Caco-2 (cell line): ENCODE measurements at regions of chr12 and their contacts with region 1.

Region 1: DNA sequence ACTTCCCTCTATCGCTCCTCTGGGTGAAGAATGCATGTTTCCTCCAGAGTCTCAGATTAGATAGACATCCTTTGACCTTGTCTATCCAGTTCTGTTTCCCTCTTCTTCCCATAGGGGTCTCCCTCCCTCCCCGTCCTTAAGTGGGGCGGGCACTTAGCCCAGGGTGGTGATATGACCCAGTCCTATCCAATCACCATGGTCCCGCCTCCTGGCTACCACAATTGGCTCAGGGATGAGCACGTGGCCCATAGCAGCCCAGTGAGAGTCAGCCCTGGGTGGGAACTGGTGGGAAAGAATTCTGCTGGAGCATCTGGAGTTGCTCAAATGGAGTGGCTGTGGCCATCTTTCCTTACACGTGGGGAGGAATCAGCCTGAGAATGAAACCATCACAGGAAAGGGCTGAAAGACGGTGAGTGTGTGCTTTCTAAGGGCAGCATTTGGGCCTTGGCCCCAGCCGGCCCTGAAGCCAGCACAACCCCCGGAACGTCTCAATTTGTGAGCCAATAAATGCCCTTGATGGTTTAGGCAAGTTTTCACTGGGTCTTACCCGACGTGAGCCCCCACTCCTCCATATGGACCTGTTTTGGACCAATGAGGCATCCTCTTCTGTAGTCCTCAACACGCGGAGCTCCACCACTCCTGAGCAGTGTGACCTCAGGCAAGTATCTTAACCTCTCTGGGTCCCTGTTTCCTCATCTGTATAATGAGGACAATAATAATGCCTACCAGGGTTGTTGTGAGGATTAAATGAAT is 14.4 kb upstream of the MLXIP start:
- DNase-seq: peak; percentile 97 to 99
- H3K4me3 ChIP-seq: peak overlapping the region; percentile 42
- H3K4me3 Mint-ChIP-seq: peak overlapping the region; percentile 85
- H3K27ac Mint-ChIP-seq: peak overlapping the region; percentile 83
- H3K4me1 ChIP-seq: peaks cover 27% of the 10 kb centered on the region
- H3K4me1 Mint-ChIP-seq: peaks cover 19% of the 10 kb centered on the region
- H3K27me3 ChIP-seq: no peaks in the 10 kb centered on the region
- H3K27me3 Mint-ChIP-seq: no peaks in the 10 kb centered on the region
- CTCF ChIP-seq: peak; percentile 29 to 75

Region 2: DNA sequence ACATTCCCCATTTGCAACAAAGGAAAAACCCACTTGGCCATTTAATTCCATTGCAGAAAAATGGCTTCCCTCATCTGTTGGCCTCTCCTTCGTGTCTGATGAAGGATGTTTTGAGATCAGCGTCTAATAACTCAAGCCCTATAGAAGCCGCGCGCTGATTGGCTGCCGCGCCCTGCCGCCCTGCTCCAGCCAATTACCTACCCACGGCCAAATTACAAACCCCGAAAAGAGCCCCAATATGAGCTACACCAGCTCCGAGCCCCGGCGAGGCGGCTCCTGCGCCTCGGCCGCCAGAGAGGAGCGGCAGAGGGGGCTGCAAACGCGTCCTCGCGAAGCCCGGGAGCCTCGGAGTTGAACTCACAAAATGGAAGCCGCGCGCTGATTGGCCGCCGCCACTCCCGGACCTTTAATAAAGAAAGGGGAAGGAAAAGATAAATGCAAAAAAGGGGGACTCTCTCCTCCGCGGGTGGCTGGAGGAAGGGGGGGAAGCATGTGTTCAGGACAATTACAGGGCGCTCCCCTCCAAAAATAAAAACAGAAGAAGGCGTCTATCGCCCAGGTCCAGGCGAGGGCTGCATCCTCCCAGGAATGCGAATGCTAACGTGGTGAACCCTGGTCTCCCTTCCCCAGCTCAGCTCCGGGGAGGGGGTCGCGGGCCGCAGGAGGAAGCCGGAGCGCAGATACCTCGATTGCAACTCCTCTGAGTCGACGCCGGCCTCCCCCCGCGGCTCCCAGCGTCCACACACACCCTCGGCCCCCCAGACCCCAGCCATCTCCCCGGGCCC is 261.2 kb before region 1 on chr12:
- CTCF ChIA-PET with region 1: no interaction called
- POLR2A ChIA-PET with region 1: no interaction called
- intact Hi-C with region 1: no loop called
- DNase-seq: peak; percentile 92 to 95
- H3K4me3 ChIP-seq: peak overlapping the region; percentile 80
- H3K4me3 Mint-ChIP-seq: peak overlapping the region; percentile 81
- H3K27ac Mint-ChIP-seq: peak overlapping the region; percentile 96
- H3K4me1 ChIP-seq: peaks cover 20% of the 10 kb centered on the region
- H3K4me1 Mint-ChIP-seq: peaks cover 20% of the 10 kb centered on the region
- H3K27me3 ChIP-seq: no peaks in the 10 kb centered on the region
- H3K27me3 Mint-ChIP-seq: no peaks in the 10 kb centered on the region
- CTCF ChIP-seq: no peak

Region 3: GRCh38 chr12:122009741-122010140 is 54.5 kb before region 1 on chr12:
- CTCF ChIA-PET with region 1: no interaction called
- POLR2A ChIA-PET with region 1: no interaction called
- intact Hi-C with region 1: no loop called
- DNase-seq: no peak
- H3K4me3 ChIP-seq: no peak overlapping the region
- H3K4me3 Mint-ChIP-seq: no peak overlapping the region
- H3K27ac Mint-ChIP-seq: no peak overlapping the region
- H3K4me1 ChIP-seq: no peaks in the 10 kb centered on the region
- H3K4me1 Mint-ChIP-seq: no peaks in the 10 kb centered on the region
- H3K27me3 ChIP-seq: no peaks in the 10 kb centered on the region
- H3K27me3 Mint-ChIP-seq: no peaks in the 10 kb centered on the region
- CTCF ChIP-seq: no peak

Region 4: DNA sequence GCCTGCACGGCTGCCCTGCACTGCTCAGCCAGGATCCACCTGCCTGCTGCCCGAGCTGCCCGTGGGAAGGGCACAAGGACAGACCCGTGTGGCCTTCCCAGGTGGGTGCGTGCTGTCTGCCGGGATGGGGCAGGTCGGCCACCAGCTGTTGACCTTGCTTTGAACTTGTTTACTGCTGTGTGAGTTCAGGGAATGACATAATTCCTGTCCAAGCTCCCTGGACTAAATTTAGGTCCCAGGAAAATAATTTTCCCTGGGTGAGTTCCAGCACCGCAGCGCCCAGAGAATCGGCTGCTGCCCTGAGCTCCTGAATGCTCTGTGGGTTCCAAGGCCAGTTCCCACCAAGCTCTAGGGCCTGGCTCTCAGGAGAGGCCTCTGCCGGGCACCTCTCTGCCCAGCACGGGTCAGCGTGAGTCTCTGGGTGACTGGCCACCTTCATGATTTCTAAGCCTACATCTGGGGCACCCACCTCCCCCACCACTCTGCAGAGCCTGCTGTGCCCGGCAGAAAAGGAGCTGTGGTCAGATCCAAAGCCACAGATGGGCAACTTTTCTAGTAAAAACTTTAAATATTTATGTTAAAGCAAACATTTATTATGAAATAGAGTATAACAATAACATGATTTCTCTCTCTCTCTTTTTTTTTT is 12.8 kb before region 1 on chr12:
- CTCF ChIA-PET with region 1: interaction called, 9 read pairs
- POLR2A ChIA-PET with region 1: interaction called, 3 read pairs
- intact Hi-C with region 1: loop called (anchors 1 kb)
- DNase-seq: no peak
- H3K4me3 ChIP-seq: no peak overlapping the region
- H3K4me3 Mint-ChIP-seq: no peak overlapping the region
- H3K27ac Mint-ChIP-seq: no peak overlapping the region
- H3K4me1 ChIP-seq: peaks cover 12% of the 10 kb centered on the region
- H3K4me1 Mint-ChIP-seq: peaks cover 6% of the 10 kb centered on the region
- H3K27me3 ChIP-seq: no peaks in the 10 kb centered on the region
- H3K27me3 Mint-ChIP-seq: no peaks in the 10 kb centered on the region
- CTCF ChIP-seq: no peak

Region 5: GRCh38 chr12:122097927-122098756 is 33.9 kb after region 1 on chr12:
- CTCF ChIA-PET with region 1: no interaction called
- POLR2A ChIA-PET with region 1: no interaction called
- intact Hi-C with region 1: loop called (anchors 2 kb)
- DNase-seq: peak; percentile 72 to 74
- H3K4me3 ChIP-seq: no peak overlapping the region
- H3K4me3 Mint-ChIP-seq: peak overlapping the region; percentile 27
- H3K27ac Mint-ChIP-seq: peak overlapping the region; percentile 68
- H3K4me1 ChIP-seq: peaks cover 29% of the 10 kb centered on the region
- H3K4me1 Mint-ChIP-seq: peaks cover 19% of the 10 kb centered on the region
- H3K27me3 ChIP-seq: no peaks in the 10 kb centered on the region
- H3K27me3 Mint-ChIP-seq: no peaks in the 10 kb centered on the region
- CTCF ChIP-seq: no peak

Region 6: DNA sequence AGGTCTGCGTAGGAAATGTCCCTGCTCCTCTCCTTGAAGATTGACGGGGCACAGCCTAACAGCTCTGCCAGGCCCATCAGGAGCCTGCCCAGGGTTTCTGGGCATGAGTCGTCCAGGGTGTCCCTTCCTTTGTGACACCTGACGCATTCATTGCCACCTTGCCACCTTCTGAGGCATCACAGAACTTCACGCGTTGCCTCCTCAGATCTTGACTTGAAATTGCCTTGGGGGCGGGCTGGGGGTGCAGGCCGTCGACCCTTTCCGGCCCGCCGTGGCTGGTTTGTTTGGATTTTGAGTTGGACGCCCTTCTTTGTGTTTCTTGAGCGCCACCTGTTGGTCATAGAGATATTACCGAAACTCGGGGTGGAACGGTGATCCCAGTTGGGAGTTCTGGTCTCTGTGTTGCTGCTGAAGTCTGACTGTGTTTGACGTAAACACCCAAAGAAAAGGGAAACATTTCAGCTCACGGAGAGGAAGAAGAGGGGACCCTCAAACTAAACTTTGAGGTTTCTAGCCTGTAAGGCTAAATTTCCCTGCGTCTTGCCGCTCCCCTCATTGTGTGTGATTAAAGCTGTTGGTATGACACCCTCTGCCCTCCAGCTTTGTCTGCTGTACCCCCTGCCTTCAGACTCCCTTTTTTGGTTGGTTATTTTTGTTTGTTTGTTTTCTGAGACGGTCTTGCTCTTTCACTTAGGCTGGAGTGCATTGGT is 59.0 kb after region 1 on chr12:
- CTCF ChIA-PET with region 1: interaction called, 6 read pairs
- POLR2A ChIA-PET with region 1: no interaction called
- intact Hi-C with region 1: loop called (anchors 2 kb)
- DNase-seq: peak; percentile 62 to 81
- H3K4me3 ChIP-seq: no peak overlapping the region
- H3K4me3 Mint-ChIP-seq: no peak overlapping the region
- H3K27ac Mint-ChIP-seq: no peak overlapping the region
- H3K4me1 ChIP-seq: peaks cover 7% of the 10 kb centered on the region; the same call in 1 of the 2 replicates
- H3K4me1 Mint-ChIP-seq: peaks cover under 1% of the 10 kb centered on the region
- H3K27me3 ChIP-seq: no peaks in the 10 kb centered on the region
- H3K27me3 Mint-ChIP-seq: no peaks in the 10 kb centered on the region
- CTCF ChIP-seq: peak; percentile 59 to 74